ENCODE measurements at regions of chr19 and their contacts with region 1.

Region 1: DNA sequence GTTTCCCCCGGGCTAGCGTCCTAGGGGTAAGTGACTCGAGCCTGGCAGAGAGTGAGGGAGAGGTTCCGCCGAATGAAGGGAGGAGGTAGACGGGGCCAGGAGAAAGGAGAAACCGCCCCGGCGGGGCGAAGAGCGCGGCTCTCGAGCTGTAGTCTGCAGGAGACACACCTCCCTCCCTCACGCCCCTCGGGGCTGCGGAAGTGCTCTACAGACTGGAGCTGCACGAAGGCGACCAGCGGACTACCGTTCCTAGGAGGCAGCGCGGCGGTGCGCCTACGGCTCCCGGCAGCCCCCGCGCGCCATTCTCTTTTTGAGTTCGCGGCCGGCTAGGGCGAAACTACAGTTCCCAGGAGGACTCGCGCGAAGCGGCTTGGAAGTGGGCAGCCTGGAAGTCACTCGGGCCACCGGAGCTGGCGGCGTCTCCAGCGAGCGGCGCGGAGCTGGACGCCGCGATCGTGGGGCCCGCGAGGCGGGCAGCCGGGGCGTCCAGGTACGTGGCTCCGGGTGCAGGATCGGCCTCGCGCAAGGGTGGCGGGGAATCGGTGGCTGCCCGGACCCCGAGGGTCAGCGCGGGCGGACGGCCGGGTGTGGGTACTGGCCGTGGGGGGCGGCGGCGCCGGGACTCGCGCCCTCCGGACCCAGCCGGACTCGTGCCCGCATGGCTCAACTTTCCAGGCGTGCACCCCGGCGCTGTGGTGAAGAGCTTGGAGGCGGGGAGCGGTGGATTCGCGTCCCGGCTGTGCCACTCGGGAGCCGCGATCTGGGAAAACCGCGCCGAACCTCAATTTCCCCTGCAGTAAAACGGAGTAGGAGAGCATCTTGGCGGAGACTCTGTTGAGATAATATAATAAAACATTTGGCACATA is at the start of gene SIPA1L3:
- DNase-seq: peak; percentile 88 to 94 (median 90)
- H3K4me3 ChIP-seq: peak within 1 kb of the TSS; percentile 79 to 98 (median 95)
- H3K4me3 Mint-ChIP-seq: peak within 1 kb of the TSS; percentile 94 to 95
- H3K27ac ChIP-seq: peak within 1 kb of the TSS in 1 of 2 donors; percentile 71
- H3K27ac Mint-ChIP-seq: peak within 1 kb of the TSS; percentile 57 to 81 (median 70)
- H3K4me1 ChIP-seq: peaks cover 15 to 21% of the 10 kb centered on the region in 2 donors
- H3K4me1 Mint-ChIP-seq: peaks cover 34% of the 10 kb centered on the region
- H3K27me3 ChIP-seq: no peaks in the 10 kb centered on the region
- H3K27me3 Mint-ChIP-seq: peaks cover 0 to 5% (median 3%) of the 10 kb centered on the region in 3 donors
- CTCF ChIP-seq: no peak
- polyA plus RNA-seq, gene SIPA1L3: 0.55 to 4.5 (median 0.99) TPM

Region 2: GRCh38 chr19:38049105-38049649 is 142.1 kb after region 1 on chr19:
- intact Hi-C with region 1: loop called in 1 of 2 experiments (anchors 10 kb)
- DNase-seq: peak; percentile 79 to 89 (median 80)
- H3K4me3 ChIP-seq: peak overlapping the region; percentile 31 to 64 (median 33)
- H3K4me3 Mint-ChIP-seq: peak overlapping the region; percentile 78 to 87
- H3K27ac ChIP-seq: peak overlapping the region; percentile 87 to 92
- H3K27ac Mint-ChIP-seq: peak overlapping the region; percentile 99 to 100 (median 99)
- H3K4me1 ChIP-seq: peaks cover 32 to 35% of the 10 kb centered on the region in 2 donors
- H3K4me1 Mint-ChIP-seq: peaks cover 43% of the 10 kb centered on the region
- H3K27me3 ChIP-seq: no peaks in the 10 kb centered on the region
- H3K27me3 Mint-ChIP-seq: peaks cover 0 to 5% (median 0%) of the 10 kb centered on the region in 3 donors
- CTCF ChIP-seq: no peak

Region 3: DNA sequence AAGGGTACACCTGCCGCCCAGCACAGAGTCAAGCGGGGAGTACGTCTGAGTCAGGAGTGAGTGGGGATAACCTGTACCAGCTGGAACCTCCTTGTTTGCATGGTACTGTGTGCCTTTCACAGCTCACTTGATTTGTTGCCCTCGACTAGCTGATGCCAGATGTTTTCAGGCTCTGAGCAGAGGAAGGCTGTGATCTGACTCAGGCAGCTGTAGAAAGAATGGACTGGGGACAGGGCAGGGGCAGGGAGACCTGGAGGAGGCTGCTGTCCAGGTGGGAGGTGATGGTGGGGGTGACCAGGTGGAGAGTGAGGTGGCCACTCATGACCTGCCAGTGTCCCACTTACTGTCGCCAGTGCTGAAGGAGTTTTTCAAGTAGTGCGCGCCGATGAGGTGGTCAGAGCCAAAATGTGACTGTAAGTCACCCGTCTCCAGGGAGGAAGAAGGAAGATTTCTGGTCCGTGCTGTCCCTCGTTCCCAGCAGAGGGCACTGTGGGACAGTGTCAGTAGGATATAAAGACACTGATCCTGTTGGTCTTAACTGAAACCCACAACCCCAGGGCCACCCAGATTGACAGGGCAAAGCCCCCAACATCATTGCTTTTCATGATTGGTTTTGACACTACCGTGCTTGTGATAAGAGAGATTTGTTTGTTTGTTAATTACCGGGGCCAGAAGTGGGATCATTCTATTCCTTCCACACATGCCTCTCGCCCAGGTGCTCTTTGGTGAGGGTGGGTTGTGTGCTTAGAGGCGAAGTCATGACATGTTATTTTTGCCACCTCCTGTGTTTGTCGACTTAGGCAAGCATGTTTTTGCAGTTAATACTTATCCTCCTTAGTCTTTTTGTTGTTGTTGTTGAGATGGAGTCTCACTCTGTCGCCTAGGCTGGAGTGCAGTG is 188.6 kb after region 1 on chr19:
- intact Hi-C with region 1: loop called (anchors 2 to 5 kb)
- DNase-seq: peak; percentile 41 to 53 (median 47)
- H3K4me3 ChIP-seq: no peak overlapping the region
- H3K4me3 Mint-ChIP-seq: no peak overlapping the region
- H3K27ac ChIP-seq: no peak overlapping the region
- H3K27ac Mint-ChIP-seq: peak overlapping the region in 2 of 7 donors; percentile 38
- H3K4me1 ChIP-seq: no peaks in the 10 kb centered on the region
- H3K4me1 Mint-ChIP-seq: peaks cover 2% of the 10 kb centered on the region
- H3K27me3 ChIP-seq: no peaks in the 10 kb centered on the region
- H3K27me3 Mint-ChIP-seq: peaks cover 0 to 2% (median 0%) of the 10 kb centered on the region in 3 donors
- CTCF ChIP-seq: peak; percentile 78

Region 4: GRCh38 chr19:38229585-38230073 is 322.5 kb after region 1 on chr19:
- intact Hi-C with region 1: loop called in 1 of 2 experiments (anchors 5 kb)
- DNase-seq: peak; percentile 1 to 21 (median 9)
- H3K4me3 ChIP-seq: no peak overlapping the region
- H3K4me3 Mint-ChIP-seq: peak overlapping the region in 1 of 2 donors; percentile 69
- H3K27ac ChIP-seq: no peak overlapping the region
- H3K27ac Mint-ChIP-seq: no peak overlapping the region
- H3K4me1 ChIP-seq: peaks cover 6 to 9% of the 10 kb centered on the region in 2 donors
- H3K4me1 Mint-ChIP-seq: peaks cover 4% of the 10 kb centered on the region
- H3K27me3 ChIP-seq: peaks cover 42 to 69% of the 10 kb centered on the region in 2 donors
- H3K27me3 Mint-ChIP-seq: peaks cover 55 to 75% (median 64%) of the 10 kb centered on the region in 3 donors
- CTCF ChIP-seq: no peak

Region 5: GRCh38 chr19:38245826-38246498 is 338.9 kb after region 1 on chr19:
- intact Hi-C with region 1: loop called in 1 of 2 experiments (anchors 5 kb)
- DNase-seq: no peak
- H3K4me3 ChIP-seq: no peak overlapping the region
- H3K4me3 Mint-ChIP-seq: no peak overlapping the region
- H3K27ac ChIP-seq: no peak overlapping the region
- H3K27ac Mint-ChIP-seq: no peak overlapping the region
- H3K4me1 ChIP-seq: no peaks in the 10 kb centered on the region
- H3K4me1 Mint-ChIP-seq: peaks cover 8% of the 10 kb centered on the region
- H3K27me3 ChIP-seq: no peaks in the 10 kb centered on the region
- H3K27me3 Mint-ChIP-seq: peaks cover 4 to 15% (median 5%) of the 10 kb centered on the region in 3 donors
- CTCF ChIP-seq: no peak

Region 6: DNA sequence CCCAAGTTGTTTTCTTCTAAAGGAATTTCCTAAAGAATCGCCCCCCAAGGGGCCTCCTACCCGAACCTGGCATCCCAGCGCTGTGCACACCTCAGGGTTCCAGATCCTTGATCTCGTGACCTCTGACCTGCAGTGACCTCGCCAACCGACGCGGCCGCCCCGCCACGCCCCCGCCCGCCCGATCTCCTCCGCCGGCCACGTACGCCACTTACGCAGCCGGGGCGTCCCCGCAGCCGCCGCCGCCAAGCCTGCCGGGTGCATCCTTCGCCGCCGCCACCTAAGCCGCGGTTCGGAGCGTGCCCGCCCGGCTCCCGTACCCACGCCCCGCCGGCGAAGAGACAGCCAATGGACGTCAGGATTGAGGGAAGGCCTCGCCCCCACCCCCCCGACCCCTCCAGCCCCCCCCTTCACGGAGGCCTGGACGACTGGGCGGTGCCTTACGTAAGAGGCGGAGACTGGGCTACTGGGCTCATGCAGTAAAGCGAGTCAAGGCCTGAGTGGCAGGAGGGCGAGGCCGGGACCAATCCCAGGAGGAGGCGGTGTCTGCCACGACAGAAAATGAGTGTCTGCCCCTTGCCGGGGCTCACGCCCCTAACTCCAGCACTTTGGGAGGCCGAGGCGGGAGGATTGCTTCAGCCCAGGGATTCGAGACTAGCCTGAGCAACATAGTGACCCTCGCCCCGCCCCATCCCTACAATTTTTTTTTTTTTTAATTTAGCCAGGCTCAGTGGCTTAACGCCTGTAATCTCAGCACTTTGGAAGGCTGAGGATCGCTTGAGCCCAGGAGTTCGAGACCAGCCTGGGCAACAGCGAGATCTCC is 408.8 kb after region 1 on chr19 and contains the start of gene YIF1B:
- intact Hi-C with region 1: loop called (anchors 5 kb)
- DNase-seq: peak; percentile 94 to 97 (median 95)
- H3K4me3 ChIP-seq: peak within 1 kb of the TSS; percentile 44 to 85 (median 61)
- H3K4me3 Mint-ChIP-seq: peak within 1 kb of the TSS; percentile 77 to 91
- H3K27ac ChIP-seq: peak within 1 kb of the TSS; percentile 91 to 92
- H3K27ac Mint-ChIP-seq: peak within 1 kb of the TSS; percentile 92 to 98 (median 95)
- H3K4me1 ChIP-seq: peaks cover 69 to 85% of the 10 kb centered on the region in 2 donors
- H3K4me1 Mint-ChIP-seq: peaks cover 68% of the 10 kb centered on the region
- H3K27me3 ChIP-seq: no peaks in the 10 kb centered on the region
- H3K27me3 Mint-ChIP-seq: peaks cover 2 to 4% (median 3%) of the 10 kb centered on the region in 3 donors
- CTCF ChIP-seq: no peak
- polyA plus RNA-seq, gene YIF1B: 79.4 to 90.5 (median 86.1) TPM

Region 7: GRCh38 chr19:38335949-38336637 is 429.0 kb after region 1 on chr19:
- intact Hi-C with region 1: loop called in 1 of 2 experiments (anchors 5 kb)
- DNase-seq: peak; percentile 88 to 95 (median 89)
- H3K4me3 ChIP-seq: peak overlapping the region; percentile 74 to 100 (median 79)
- H3K4me3 Mint-ChIP-seq: peak overlapping the region; percentile 93 to 98
- H3K27ac ChIP-seq: peak overlapping the region; percentile 89 to 99
- H3K27ac Mint-ChIP-seq: peak overlapping the region; percentile 98 to 100 (median 100)
- H3K4me1 ChIP-seq: peaks cover 6 to 12% of the 10 kb centered on the region in 2 donors
- H3K4me1 Mint-ChIP-seq: peaks cover 6% of the 10 kb centered on the region
- H3K27me3 ChIP-seq: no peaks in the 10 kb centered on the region
- H3K27me3 Mint-ChIP-seq: peaks cover 0 to 4% (median 0%) of the 10 kb centered on the region in 3 donors
- CTCF ChIP-seq: no peak

Measured in CD14-positive monocyte (primary cell).